ENCODE measurements at regions of chr18 and their contacts with region 1.

Region 1: GRCh38 chr18:23422672-23423418 is 30.2 kb upstream of the RIOK3 start:
- DNase-seq: peak; percentile 25
- H3K4me3 ChIP-seq: no peak overlapping the region
- H3K27me3 ChIP-seq: no peaks in the 10 kb centered on the region
- CTCF ChIP-seq: no peak

Region 2: GRCh38 chr18:23412351-23412964 is 10.4 kb before region 1 on chr18:
- CTCF ChIA-PET with region 1: interaction called, 11 read pairs
- POLR2A ChIA-PET with region 1: no interaction called
- DNase-seq: no peak
- H3K4me3 ChIP-seq: no peak overlapping the region
- H3K27me3 ChIP-seq: no peaks in the 10 kb centered on the region
- CTCF ChIP-seq: no peak